A549 (cell line): ENCODE measurements at regions of chr2 and their contacts with region 1.

Region 1: GRCh38 chr2:108927936-108928659 is 60.9 kb downstream of the EDAR start:
- DNase-seq: peak; percentile 61 to 64
- ATAC-seq: peak; percentile 80 to 92; a peak in 5 of 6 replicates
- H3K4me3 ChIP-seq: no peak overlapping the region
- H3K27ac ChIP-seq: no peak overlapping the region
- H3K4me1 ChIP-seq: no peaks in the 10 kb centered on the region
- CTCF ChIP-seq: peak; percentile 72
- EP300 ChIP-seq: no peak
- POLR2A ChIP-seq: no peak
- RAD21 ChIP-seq: peak; percentile 71 to 74

Region 2: DNA sequence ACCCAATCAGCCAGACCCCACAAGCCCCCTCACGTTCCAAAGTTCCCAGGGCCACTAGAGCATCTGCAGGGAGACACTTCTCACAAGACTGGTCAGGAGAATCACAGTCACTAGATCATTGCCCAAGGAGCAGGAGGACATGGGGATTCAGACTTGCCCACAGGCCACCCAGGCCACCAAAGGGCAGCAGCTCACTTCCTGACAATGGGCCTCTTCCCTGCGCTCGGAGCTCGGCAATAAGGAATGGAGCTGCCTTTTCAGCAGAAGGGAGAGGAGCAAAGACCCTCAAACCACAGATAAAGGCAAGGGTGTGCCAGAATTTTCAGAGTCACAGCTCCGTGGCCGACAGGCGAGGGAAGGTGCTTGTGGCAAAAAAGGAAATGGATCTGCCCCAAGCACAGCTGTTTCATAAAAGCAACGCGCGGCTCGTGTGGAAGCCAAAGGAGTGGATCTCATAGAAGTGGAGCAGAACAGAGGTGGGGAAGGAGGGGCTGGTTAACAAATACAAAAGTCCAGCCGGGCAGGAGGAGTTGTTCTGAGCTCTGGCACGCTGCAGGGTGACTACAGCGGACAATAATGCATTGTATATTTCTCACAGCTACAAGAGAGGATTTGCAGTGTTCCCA is 11.2 kb before region 1 on chr2:
- CTCF ChIA-PET with region 1: interaction called, 74 read pairs
- POLR2A ChIA-PET with region 1: no interaction called
- DNase-seq: no peak
- ATAC-seq: no peak
- H3K4me3 ChIP-seq: no peak overlapping the region
- H3K27ac ChIP-seq: no peak overlapping the region
- H3K4me1 ChIP-seq: no peaks in the 10 kb centered on the region
- CTCF ChIP-seq: no peak
- EP300 ChIP-seq: no peak
- POLR2A ChIP-seq: no peak
- RAD21 ChIP-seq: no peak

Region 3: GRCh38 chr2:108978709-108979111 is 50.6 kb after region 1 on chr2:
- CTCF ChIA-PET with region 1: interaction called, 12 read pairs
- POLR2A ChIA-PET with region 1: no interaction called
- DNase-seq: no peak
- ATAC-seq: peak in 1 of 2 experiments; percentile 17; a peak in 2 of 6 replicates
- H3K4me3 ChIP-seq: no peak overlapping the region
- H3K27ac ChIP-seq: peak overlapping the region in 1 of 2 experiments; percentile 21; a peak in 1 of 6 replicates
- H3K4me1 ChIP-seq: peaks cover 44% of the 10 kb centered on the region
- CTCF ChIP-seq: no peak
- EP300 ChIP-seq: no peak
- POLR2A ChIP-seq: no peak
- RAD21 ChIP-seq: no peak

Region 4: GRCh38 chr2:108988796-108989713 is 61.0 kb after region 1 on chr2 and contains the start of gene EDAR:
- CTCF ChIA-PET with region 1: interaction called, 46 read pairs
- POLR2A ChIA-PET with region 1: interaction called, 4 read pairs
- DNase-seq: peak; percentile 64 to 65
- ATAC-seq: peak; percentile 93 to 95
- H3K4me3 ChIP-seq: peak within 1 kb of the TSS; percentile 29; the same call in 1 of the 3 replicates
- H3K27ac ChIP-seq: 0 out of 6 replicates have a peak within 1 kb of the TSS, but pooled peaks of 1 of the 2 experiments have one; percentile 9
- H3K4me1 ChIP-seq: peaks cover 9% of the 10 kb centered on the region
- CTCF ChIP-seq: peak; percentile 67
- EP300 ChIP-seq: no peak
- POLR2A ChIP-seq: no peak
- RAD21 ChIP-seq: peak; percentile 69 to 82
- polyA plus RNA-seq, gene EDAR: 0.26 and 0.32 TPM in 2 replicates

Region 5: GRCh38 chr2:109005686-109006204 is 77.6 kb after region 1 on chr2:
- CTCF ChIA-PET with region 1: interaction called, 18 read pairs
- POLR2A ChIA-PET with region 1: no interaction called
- DNase-seq: no peak
- ATAC-seq: no peak
- H3K4me3 ChIP-seq: no peak overlapping the region
- H3K27ac ChIP-seq: no peak overlapping the region
- H3K4me1 ChIP-seq: no peaks in the 10 kb centered on the region; the same call in 2 of the 3 replicates
- CTCF ChIP-seq: no peak
- EP300 ChIP-seq: no peak
- POLR2A ChIP-seq: no peak
- RAD21 ChIP-seq: no peak